ENCODE measurements at regions of chr12 and their contacts with region 1.

Region 1: GRCh38 chr12:65823513-65824375 is 539 bp upstream of the HMGA2 start:
- DNase-seq: no peak
- H3K4me3 ChIP-seq: peak overlapping the region; percentile 58 to 71 (median 60)
- H3K27ac ChIP-seq: no peak overlapping the region
- H3K4me1 ChIP-seq: peaks cover 30 to 43% (median 37%) of the 10 kb centered on the region in 4 donors
- H3K27me3 ChIP-seq: peaks cover 2 to 100% (median 52%) of the 10 kb centered on the region in 4 donors
- CTCF ChIP-seq: no peak
- EP300 ChIP-seq: no peak
- POLR2A ChIP-seq: no peak

Region 2: GRCh38 chr12:65881965-65882413 is 58.2 kb after region 1 on chr12:
- intact Hi-C with region 1: loop called (anchors 5 kb)
- DNase-seq: peak; percentile 94
- H3K4me3 ChIP-seq: peak overlapping the region; percentile 43 to 60 (median 45)
- H3K27ac ChIP-seq: peak overlapping the region; percentile 54 to 77 (median 70)
- H3K4me1 ChIP-seq: peaks cover 21 to 28% (median 25%) of the 10 kb centered on the region in 4 donors
- H3K27me3 ChIP-seq: no peaks in the 10 kb centered on the region
- CTCF ChIP-seq: peak in 1 of 3 experiments; percentile 35
- EP300 ChIP-seq: no peak
- POLR2A ChIP-seq: no peak

Region 3: GRCh38 chr12:65891987-65892481 is 68.3 kb after region 1 on chr12:
- intact Hi-C with region 1: loop called (anchors 5 kb)
- DNase-seq: no peak
- H3K4me3 ChIP-seq: peak overlapping the region in 1 of 4 donors; percentile 5
- H3K27ac ChIP-seq: peak overlapping the region; percentile 34 to 70 (median 56)
- H3K4me1 ChIP-seq: peaks cover 16 to 23% (median 21%) of the 10 kb centered on the region in 4 donors
- H3K27me3 ChIP-seq: no peaks in the 10 kb centered on the region
- CTCF ChIP-seq: no peak
- EP300 ChIP-seq: no peak
- POLR2A ChIP-seq: no peak

Measured in esophagus muscularis mucosa (tissue), 4 donors.